ENCODE measurements at regions of chr9 and their contacts with region 1.

Region 1: GRCh38 chr9:35945341-35946018 is 12.5 kb downstream of the OR2S2 start:
- DNase-seq: peak; percentile 34 to 61 (median 55)
- ATAC-seq: peak; percentile 86
- H3K4me3 ChIP-seq: no peak overlapping the region
- H3K4me3 Mint-ChIP-seq: peak overlapping the region in 9 of 10 donors; percentile 4 to 70 (median 49)
- H3K27ac ChIP-seq: no peak overlapping the region
- H3K27ac Mint-ChIP-seq: peak overlapping the region in 8 of 9 donors; percentile 41 to 82 (median 60)
- H3K4me1 ChIP-seq: peaks cover 9 to 71% of the 10 kb centered on the region in 2 donors
- H3K4me1 Mint-ChIP-seq: peaks cover 19 to 76% (median 72%) of the 10 kb centered on the region in 7 donors
- H3K27me3 ChIP-seq: no peaks in the 10 kb centered on the region
- H3K27me3 Mint-ChIP-seq: peaks cover 0 to 11% (median 0%) of the 10 kb centered on the region in 5 donors

Region 2: GRCh38 chr9:35903049-35903448 is 42.4 kb before region 1 on chr9:
- CTCF ChIA-PET with region 1: interaction called, 80 read pairs
- POLR2A ChIA-PET with region 1: interaction called, 9 read pairs
- intact Hi-C with region 1: loop called (anchors 1 kb)
- DNase-seq: peak in 7 of 9 donors; percentile 41 to 69 (median 63)
- ATAC-seq: peak; percentile 88
- H3K4me3 ChIP-seq: no peak overlapping the region
- H3K4me3 Mint-ChIP-seq: no peak overlapping the region
- H3K27ac ChIP-seq: no peak overlapping the region
- H3K27ac Mint-ChIP-seq: peak overlapping the region in 1 of 9 donors; percentile 67
- H3K4me1 ChIP-seq: peaks cover 3 to 31% of the 10 kb centered on the region in 2 donors
- H3K4me1 Mint-ChIP-seq: peaks cover 8 to 45% (median 28%) of the 10 kb centered on the region in 7 donors
- H3K27me3 ChIP-seq: peaks cover 0 to 3% of the 10 kb centered on the region in 2 donors
- H3K27me3 Mint-ChIP-seq: peaks cover 0 to 23% (median 0%) of the 10 kb centered on the region in 5 donors

Region 3: GRCh38 chr9:35910613-35911359 is 34.7 kb before region 1 on chr9:
- CTCF ChIA-PET with region 1: interaction called, 80 read pairs
- POLR2A ChIA-PET with region 1: interaction called, 11 read pairs
- intact Hi-C with region 1: loop called in 1 of 2 experiments (anchors 2 kb)
- DNase-seq: peak in 7 of 9 donors; percentile 38 to 72 (median 54)
- ATAC-seq: peak; percentile 69
- H3K4me3 ChIP-seq: peak overlapping the region; percentile 25
- H3K4me3 Mint-ChIP-seq: peak overlapping the region; percentile 59 to 86 (median 76)
- H3K27ac ChIP-seq: peak overlapping the region; percentile 66
- H3K27ac Mint-ChIP-seq: peak overlapping the region in 8 of 9 donors; percentile 91 to 98 (median 96)
- H3K4me1 ChIP-seq: peaks cover 35 to 63% of the 10 kb centered on the region in 2 donors
- H3K4me1 Mint-ChIP-seq: peaks cover 6 to 66% (median 56%) of the 10 kb centered on the region in 7 donors
- H3K27me3 ChIP-seq: no peaks in the 10 kb centered on the region
- H3K27me3 Mint-ChIP-seq: no peaks in the 10 kb centered on the region

Region 4: GRCh38 chr9:35923927-35924763 is 21.3 kb before region 1 on chr9:
- CTCF ChIA-PET with region 1: interaction called, 15 read pairs
- POLR2A ChIA-PET with region 1: interaction called, 6 read pairs
- intact Hi-C with region 1: no loop called
- DNase-seq: no peak
- ATAC-seq: no peak
- H3K4me3 ChIP-seq: no peak overlapping the region
- H3K4me3 Mint-ChIP-seq: no peak overlapping the region
- H3K27ac ChIP-seq: no peak overlapping the region
- H3K27ac Mint-ChIP-seq: peak overlapping the region in 1 of 9 donors; percentile 19
- H3K4me1 ChIP-seq: no peaks in the 10 kb centered on the region
- H3K4me1 Mint-ChIP-seq: peaks cover 1 to 27% (median 14%) of the 10 kb centered on the region in 7 donors
- H3K27me3 ChIP-seq: no peaks in the 10 kb centered on the region
- H3K27me3 Mint-ChIP-seq: peaks cover 0 to 20% (median 0%) of the 10 kb centered on the region in 5 donors

Measured in naive thymus-derived CD4-positive, alpha-beta T cell (primary cell).